MCF 10A (cell line): ENCODE measurements at regions of chr1 and their contacts with region 1.

Region 1: DNA sequence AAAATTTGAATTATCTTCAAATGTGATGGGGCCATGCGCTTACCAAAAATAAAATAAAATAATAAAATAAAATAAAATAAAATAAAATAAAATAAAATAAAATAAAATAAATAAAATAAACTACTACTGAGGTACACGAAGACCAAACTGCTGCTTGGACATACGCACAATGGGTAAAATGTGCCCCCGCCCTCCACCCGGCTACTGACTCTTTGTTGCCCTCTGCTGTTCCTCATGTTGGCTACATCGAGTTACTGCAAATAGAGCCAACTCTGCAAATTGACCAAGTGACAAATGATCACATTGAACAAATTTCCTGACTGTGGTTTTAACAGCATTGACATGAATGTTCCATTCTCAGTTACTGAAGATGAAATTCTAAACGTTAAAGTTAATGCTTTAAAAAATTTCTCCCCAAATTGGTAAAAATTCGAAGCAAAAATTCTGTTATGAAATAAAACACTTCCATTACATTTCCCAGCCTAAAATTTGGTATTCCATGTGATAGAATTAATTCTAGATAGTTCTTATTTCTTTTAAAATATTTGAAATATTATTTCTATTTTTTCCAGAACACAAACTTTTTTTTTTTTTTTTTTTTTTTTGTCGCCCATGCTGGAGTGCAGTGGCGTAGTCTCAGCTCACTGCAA is 18.8 kb upstream of the MAP1LC3C start:
- DNase-seq: peak; percentile 86
- H3K4me3 Mint-ChIP-seq: no peak overlapping the region
- H3K27ac Mint-ChIP-seq: no peak overlapping the region
- H3K4me1 Mint-ChIP-seq: peaks cover 7% of the 10 kb centered on the region
- H3K27me3 Mint-ChIP-seq: no peaks in the 10 kb centered on the region
- CTCF ChIP-seq: peak; percentile 88

Region 2: DNA sequence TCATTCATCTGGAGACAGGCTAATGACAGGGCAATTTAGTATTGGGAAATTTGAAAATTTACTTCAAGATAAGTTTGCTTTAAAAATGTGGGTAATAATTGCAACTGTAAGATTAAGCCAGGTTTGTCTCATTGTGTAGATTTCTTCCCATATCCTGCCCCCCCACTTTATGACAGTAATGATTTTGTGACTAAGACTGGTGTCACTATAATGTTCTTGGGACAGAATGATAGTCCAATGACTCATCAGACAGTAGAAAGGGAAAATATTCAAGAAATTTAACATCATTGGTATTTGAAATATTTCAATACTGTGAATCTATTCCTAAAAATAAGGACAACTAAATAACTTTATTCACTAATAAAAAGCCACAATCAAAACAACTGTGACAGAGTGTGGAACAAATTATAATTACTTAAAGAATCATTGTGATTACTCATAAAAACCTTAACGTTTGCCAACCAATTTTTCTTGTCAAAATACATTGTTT is 534.9 kb before region 1 on chr1:
- CTCF ChIA-PET with region 1: no interaction called
- POLR2A ChIA-PET with region 1: no interaction called
- intact Hi-C with region 1: no loop called
- DNase-seq: peak; percentile 78
- H3K4me3 Mint-ChIP-seq: no peak overlapping the region
- H3K27ac Mint-ChIP-seq: peak overlapping the region; percentile 87
- H3K4me1 Mint-ChIP-seq: peaks cover 26% of the 10 kb centered on the region
- H3K27me3 Mint-ChIP-seq: no peaks in the 10 kb centered on the region
- CTCF ChIP-seq: no peak

Region 3: DNA sequence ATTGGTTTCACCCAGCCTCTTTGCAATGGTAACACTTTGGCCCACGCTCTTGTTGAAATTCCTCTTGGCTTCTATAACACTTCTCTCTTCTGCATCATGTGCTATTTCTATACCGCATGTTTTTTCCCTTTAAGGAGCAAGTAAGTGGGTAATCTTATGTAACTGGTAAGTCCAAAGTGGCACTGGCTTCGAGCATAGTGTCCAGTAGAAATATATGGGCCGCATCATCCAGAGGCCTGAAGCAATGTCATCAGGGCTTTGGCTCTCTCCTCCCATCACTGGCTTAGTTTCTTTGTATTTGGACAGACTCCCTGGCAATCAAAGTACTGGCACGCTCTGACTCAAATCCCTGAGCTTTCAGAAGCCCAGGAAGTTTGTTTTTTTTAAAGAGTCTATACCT is 395.0 kb before region 1 on chr1:
- CTCF ChIA-PET with region 1: no interaction called
- POLR2A ChIA-PET with region 1: no interaction called
- intact Hi-C with region 1: no loop called
- DNase-seq: no peak
- H3K4me3 Mint-ChIP-seq: no peak overlapping the region
- H3K27ac Mint-ChIP-seq: no peak overlapping the region
- H3K4me1 Mint-ChIP-seq: peaks cover 30% of the 10 kb centered on the region
- H3K27me3 Mint-ChIP-seq: no peaks in the 10 kb centered on the region
- CTCF ChIP-seq: no peak

Region 4: DNA sequence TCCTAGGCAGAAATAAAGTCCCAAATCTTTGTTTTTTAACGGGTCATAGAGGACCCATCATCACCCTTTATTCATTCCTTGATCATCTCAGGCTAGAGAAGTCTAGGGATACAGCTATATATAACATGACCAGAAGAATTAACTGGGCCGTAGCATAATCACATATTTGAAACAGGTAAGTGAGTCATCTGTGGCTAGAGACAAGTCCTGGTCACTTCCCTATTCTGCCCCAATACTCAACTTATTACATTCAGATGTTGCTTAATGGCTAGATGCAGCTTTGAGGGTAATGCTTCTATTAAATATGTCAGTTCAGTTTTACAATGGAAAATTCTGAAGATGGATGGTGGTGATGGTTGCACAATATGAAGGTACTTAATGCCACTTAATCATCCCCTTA is 122.7 kb before region 1 on chr1:
- CTCF ChIA-PET with region 1: interaction called, 255 read pairs
- POLR2A ChIA-PET with region 1: interaction called, 3 read pairs
- intact Hi-C with region 1: loop called (anchors 1 kb)
- DNase-seq: no peak
- H3K4me3 Mint-ChIP-seq: no peak overlapping the region
- H3K27ac Mint-ChIP-seq: no peak overlapping the region
- H3K4me1 Mint-ChIP-seq: no peaks in the 10 kb centered on the region
- H3K27me3 Mint-ChIP-seq: no peaks in the 10 kb centered on the region
- CTCF ChIP-seq: no peak

Region 5: DNA sequence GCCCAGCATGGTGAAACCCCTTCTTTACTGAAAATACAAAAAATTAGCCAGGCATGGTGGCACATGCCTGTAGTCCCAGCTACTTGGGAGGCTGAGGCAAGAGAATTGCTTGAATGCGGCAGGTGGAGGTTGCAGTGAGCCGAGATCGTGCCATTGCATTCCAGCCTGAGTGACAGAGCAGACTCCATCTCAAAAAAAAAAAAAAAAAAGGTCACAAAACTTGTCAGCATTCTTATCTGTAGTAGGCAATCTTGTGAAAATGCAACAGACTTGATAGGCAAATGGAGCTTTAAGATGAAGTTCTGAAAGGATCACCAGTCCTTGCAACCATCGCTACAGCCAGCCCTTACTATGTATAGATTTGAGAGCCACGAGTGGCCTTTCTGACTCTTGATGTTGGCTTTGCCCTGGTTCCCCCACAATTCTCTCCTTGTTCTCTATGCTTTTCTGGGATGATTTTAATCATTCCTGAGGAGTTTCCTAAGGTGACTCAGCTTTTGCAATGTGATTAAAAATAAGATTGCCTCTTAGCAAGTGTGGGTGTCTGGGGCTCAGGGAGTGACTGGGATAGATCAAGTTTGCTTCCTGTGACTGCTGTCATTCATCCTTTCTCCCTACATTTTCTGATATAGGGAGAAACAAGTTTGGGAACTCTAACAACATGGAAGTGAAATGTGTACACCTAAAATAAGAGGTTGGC is 11.7 kb before region 1 on chr1:
- CTCF ChIA-PET with region 1: interaction called, 21 read pairs
- POLR2A ChIA-PET with region 1: no interaction called
- intact Hi-C with region 1: no loop called
- DNase-seq: no peak
- H3K4me3 Mint-ChIP-seq: no peak overlapping the region
- H3K27ac Mint-ChIP-seq: no peak overlapping the region
- H3K4me1 Mint-ChIP-seq: no peaks in the 10 kb centered on the region
- H3K27me3 Mint-ChIP-seq: no peaks in the 10 kb centered on the region
- CTCF ChIP-seq: no peak

Region 6: DNA sequence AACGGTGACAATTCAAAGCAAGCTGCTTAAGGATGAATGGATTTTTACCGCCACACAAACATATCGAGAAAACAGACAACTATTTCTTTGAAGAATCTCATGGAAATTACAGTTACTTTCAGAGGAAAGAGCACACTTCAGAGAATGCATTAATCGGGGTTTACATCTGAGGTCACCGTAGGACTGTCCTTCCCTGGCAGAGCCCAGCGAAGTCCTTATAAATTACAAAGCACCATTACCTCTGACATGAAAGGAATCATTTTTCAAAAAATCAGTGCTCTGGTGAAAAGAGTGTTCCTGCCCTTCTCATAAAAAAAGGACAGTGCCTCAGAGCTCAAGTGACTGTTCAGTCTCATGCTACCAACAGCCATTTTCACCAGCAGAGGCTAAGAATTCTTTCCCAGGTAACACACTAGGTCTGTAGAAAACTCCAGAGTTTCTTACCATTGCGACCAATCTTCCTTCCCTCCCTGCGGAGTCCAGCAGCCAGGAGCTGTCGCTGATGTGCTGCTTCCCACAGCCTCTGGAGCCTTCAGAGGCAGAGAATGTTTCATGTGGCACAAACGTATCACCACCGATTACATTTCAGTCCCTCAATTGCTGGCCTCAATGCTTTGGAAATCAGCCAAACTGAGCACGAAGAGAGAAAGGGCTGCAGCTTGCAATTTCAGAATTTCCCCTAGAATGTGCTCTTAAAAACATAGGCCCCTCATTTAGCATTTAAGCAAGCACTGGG is 431.4 kb after region 1 on chr1:
- CTCF ChIA-PET with region 1: interaction called, 103 read pairs
- POLR2A ChIA-PET with region 1: interaction called, 3 read pairs
- intact Hi-C with region 1: loop called (anchors 1 kb)
- DNase-seq: no peak
- H3K4me3 Mint-ChIP-seq: no peak overlapping the region
- H3K27ac Mint-ChIP-seq: no peak overlapping the region
- H3K4me1 Mint-ChIP-seq: peaks cover 9% of the 10 kb centered on the region
- H3K27me3 Mint-ChIP-seq: no peaks in the 10 kb centered on the region
- CTCF ChIP-seq: no peak

Region 7: DNA sequence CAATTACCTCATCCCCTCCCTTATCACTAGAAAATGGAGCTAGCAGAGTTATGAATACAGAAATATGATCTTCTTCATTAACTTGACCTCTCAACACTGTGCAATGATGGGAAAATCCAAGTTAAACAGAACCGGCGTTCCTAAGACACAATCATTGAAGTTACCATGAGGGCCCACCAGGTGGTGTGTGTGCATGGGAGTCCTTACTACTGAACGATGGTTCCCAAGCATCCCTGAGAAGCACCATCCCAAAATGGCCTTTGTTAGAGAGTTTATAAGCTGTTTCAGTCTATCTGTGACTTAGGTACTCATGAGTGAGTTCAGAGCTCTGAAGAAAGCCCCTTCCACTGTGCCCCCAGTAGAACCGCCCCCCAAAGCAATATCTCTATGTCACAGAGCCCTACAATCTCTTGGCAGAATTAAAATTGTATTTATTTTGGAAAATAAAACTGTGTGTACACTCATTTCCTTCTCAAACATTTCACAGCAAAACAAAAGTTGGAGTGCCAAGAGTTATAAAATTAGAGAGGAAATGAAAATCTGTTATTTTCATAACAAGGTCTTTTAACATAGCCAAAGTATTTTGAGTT is 449.9 kb after region 1 on chr1:
- CTCF ChIA-PET with region 1: interaction called, 6 read pairs
- POLR2A ChIA-PET with region 1: no interaction called
- intact Hi-C with region 1: loop called (anchors 5 kb)
- DNase-seq: peak; percentile 88
- H3K4me3 Mint-ChIP-seq: no peak overlapping the region
- H3K27ac Mint-ChIP-seq: no peak overlapping the region
- H3K4me1 Mint-ChIP-seq: peaks cover 6% of the 10 kb centered on the region
- H3K27me3 Mint-ChIP-seq: no peaks in the 10 kb centered on the region
- CTCF ChIP-seq: peak; percentile 97

Region 8: DNA sequence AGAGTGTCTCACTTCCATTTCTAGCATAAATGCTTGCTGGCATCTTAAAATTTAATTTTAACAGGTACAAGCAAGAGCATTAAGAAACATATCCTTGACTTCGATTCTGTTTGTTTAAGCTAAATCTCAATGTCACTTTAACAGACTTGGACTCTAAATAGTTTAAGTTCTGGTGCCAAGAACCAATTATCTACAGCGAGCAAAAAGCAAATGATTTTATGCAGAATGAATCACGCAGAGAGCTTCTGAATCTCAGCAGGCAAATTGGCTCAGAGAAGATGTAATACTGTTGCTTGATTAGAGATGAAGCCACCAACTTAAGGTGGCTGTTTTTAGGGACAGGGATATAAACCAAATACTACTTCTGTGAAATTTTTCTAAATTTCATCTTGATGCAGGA is 623.8 kb after region 1 on chr1:
- CTCF ChIA-PET with region 1: interaction called, 4 read pairs
- POLR2A ChIA-PET with region 1: no interaction called
- intact Hi-C with region 1: loop called (anchors 10 kb)
- DNase-seq: no peak
- H3K4me3 Mint-ChIP-seq: no peak overlapping the region
- H3K27ac Mint-ChIP-seq: no peak overlapping the region
- H3K4me1 Mint-ChIP-seq: no peaks in the 10 kb centered on the region
- H3K27me3 Mint-ChIP-seq: no peaks in the 10 kb centered on the region
- CTCF ChIP-seq: no peak